CD4-positive, alpha-beta T cell (primary cell): ENCODE measurements at regions of chr4 and their contacts with region 1.

Region 1: DNA sequence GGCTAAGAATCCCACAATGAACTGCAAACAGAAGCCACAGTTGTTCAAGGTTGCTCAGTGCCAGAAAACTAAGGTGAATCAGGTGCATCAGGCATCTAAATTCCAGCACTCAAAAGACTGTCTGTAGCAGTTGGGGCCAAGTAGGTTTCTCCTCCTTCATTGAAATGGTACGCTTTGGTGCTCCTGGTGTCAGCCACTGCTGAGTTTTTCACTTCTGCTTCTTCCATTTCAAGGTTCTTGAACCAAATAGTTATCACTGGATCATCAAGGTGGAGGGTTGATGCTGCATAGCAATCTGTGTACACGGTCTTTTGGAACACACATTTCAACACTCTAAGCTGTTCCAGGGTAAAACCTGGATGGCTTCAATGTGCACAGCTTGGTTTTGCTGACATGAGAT is 74.4 kb downstream of the TMA16 start:
- DNase-seq: no peak
- ATAC-seq: no peak
- H3K4me3 ChIP-seq: no peak overlapping the region
- H3K4me3 Mint-ChIP-seq: no peak overlapping the region
- H3K27ac ChIP-seq: no peak overlapping the region
- H3K27ac Mint-ChIP-seq: no peak overlapping the region
- H3K4me1 ChIP-seq: no peaks in the 10 kb centered on the region
- H3K4me1 Mint-ChIP-seq: peaks cover 14% of the 10 kb centered on the region
- H3K27me3 ChIP-seq: no peaks in the 10 kb centered on the region
- H3K27me3 Mint-ChIP-seq: no peaks in the 10 kb centered on the region
- CTCF ChIP-seq: no peak

Region 2: DNA sequence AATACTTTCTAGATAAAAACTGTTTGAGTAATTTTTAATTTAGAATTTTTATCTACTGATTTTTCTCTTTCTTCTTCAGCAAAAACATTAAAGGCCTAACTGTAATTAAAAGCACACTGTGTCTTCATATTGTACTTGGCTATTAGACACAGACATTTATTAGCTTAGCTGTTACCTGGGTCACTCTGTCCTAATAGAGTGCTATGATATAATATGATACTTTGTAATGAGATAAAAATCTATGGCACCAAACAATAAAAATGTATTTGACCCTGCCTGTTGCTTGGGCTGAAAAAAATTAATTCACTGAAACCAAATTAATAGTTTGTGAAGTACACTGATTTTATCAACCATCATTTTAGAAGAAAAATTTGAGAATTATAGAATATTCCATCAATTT is 918.0 kb before region 1 on chr4:
- CTCF ChIA-PET with region 1: no interaction called
- POLR2A ChIA-PET with region 1: no interaction called
- intact Hi-C with region 1: loop called in 1 of 2 experiments (anchors 5 kb)
- DNase-seq: no peak
- ATAC-seq: no peak
- H3K4me3 ChIP-seq: no peak overlapping the region
- H3K4me3 Mint-ChIP-seq: no peak overlapping the region
- H3K27ac ChIP-seq: no peak overlapping the region
- H3K27ac Mint-ChIP-seq: no peak overlapping the region
- H3K4me1 ChIP-seq: no peaks in the 10 kb centered on the region
- H3K4me1 Mint-ChIP-seq: no peaks in the 10 kb centered on the region
- H3K27me3 ChIP-seq: no peaks in the 10 kb centered on the region
- H3K27me3 Mint-ChIP-seq: no peaks in the 10 kb centered on the region
- CTCF ChIP-seq: no peak

Region 3: DNA sequence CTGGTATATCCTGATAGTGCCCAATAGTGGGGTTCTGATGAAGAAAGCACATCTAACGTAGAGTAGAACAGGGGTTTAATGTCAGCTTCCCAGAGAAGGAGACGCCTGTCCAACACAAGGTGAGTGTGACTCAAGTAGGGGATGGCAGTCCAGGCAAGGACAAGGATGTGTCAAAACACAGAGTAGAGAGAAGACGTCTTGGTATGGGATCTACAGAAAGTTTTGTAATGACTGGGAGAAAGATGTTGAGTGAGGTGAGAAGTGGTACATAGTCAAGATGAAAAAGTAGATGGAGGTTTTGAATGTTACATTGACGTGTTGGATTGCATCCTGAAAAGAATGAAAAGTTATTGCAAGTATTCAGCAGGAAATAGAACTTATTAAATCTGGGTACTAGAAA is 50.0 kb after region 1 on chr4:
- CTCF ChIA-PET with region 1: no interaction called
- POLR2A ChIA-PET with region 1: no interaction called
- intact Hi-C with region 1: loop called in 1 of 2 experiments (anchors 5 kb)
- DNase-seq: no peak
- ATAC-seq: no peak
- H3K4me3 ChIP-seq: no peak overlapping the region
- H3K4me3 Mint-ChIP-seq: no peak overlapping the region
- H3K27ac ChIP-seq: no peak overlapping the region
- H3K27ac Mint-ChIP-seq: no peak overlapping the region
- H3K4me1 ChIP-seq: peaks cover 9% of the 10 kb centered on the region
- H3K4me1 Mint-ChIP-seq: peaks cover 24% of the 10 kb centered on the region
- H3K27me3 ChIP-seq: no peaks in the 10 kb centered on the region
- H3K27me3 Mint-ChIP-seq: no peaks in the 10 kb centered on the region
- CTCF ChIP-seq: no peak